Prostate gland (tissue), 2 donors: ENCODE measurements at regions of chr6 and their contacts with region 1.

Region 1: GRCh38 chr6:63560801-63561672 is 11.2 kb upstream of the LOC128125822 start:
- DNase-seq: no peak
- H3K4me3 ChIP-seq: no peak overlapping the region
- H3K27ac ChIP-seq: no peak overlapping the region
- H3K4me1 ChIP-seq: no peaks in the 10 kb centered on the region
- H3K27me3 ChIP-seq: no peaks in the 10 kb centered on the region
- CTCF ChIP-seq: no peak
- POLR2A ChIP-seq: no peak

Region 2: GRCh38 chr6:63333440-63333839 is 227.6 kb before region 1 on chr6:
- intact Hi-C with region 1: no loop called
- DNase-seq: no peak
- H3K4me3 ChIP-seq: no peak overlapping the region
- H3K27ac ChIP-seq: no peak overlapping the region
- H3K4me1 ChIP-seq: no peaks in the 10 kb centered on the region
- H3K27me3 ChIP-seq: no peaks in the 10 kb centered on the region
- CTCF ChIP-seq: no peak
- POLR2A ChIP-seq: no peak

Region 3: DNA sequence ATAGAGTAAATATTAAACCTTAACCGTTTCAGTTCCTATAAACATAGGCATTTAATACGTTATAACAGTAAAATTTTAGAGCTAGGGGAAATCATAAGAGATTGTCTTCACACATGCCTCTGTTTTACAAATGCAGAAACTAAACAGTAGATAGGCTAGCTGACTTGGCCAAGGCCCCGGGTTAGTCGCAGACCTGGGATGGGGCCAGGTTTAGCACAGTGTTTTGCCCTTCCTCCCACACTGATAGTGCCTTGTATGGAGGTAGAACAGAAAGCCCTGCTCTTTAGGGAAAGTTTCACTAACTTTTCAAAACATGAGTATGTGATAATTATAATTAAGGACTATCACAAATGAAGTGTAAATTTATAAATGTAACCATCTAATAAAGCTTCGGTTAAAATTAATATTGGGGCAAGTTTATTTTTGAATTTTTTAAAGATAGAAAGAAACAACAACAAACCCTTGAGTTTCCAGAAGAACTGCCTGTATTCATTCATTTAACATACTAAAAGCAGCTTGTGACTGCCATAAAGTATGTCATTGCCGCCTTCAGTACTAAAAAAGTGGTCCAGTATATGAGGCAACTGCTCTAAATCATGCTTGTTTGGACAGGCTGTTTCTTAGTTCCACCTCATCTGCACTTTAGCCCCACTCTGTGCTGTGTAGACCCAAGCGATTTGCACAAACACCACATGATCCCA is 51.2 kb before region 1 on chr6:
- intact Hi-C with region 1: loop called (anchors 10 kb)
- DNase-seq: peak; percentile 22
- H3K4me3 ChIP-seq: no peak overlapping the region
- H3K27ac ChIP-seq: no peak overlapping the region
- H3K4me1 ChIP-seq: no peaks in the 10 kb centered on the region
- H3K27me3 ChIP-seq: no peaks in the 10 kb centered on the region
- CTCF ChIP-seq: no peak
- POLR2A ChIP-seq: no peak